Mucosa of descending colon (tissue), 3 donors: ENCODE measurements at regions of chr1 and their contacts with region 1.

Region 1: GRCh38 chr1:230310381-230311163 is 115.6 kb downstream of the PGBD5 start:
- DNase-seq: peak in 2 of 3 donors; percentile 78 to 84
- ATAC-seq: peak; percentile 82
- H3K4me3 ChIP-seq: no peak overlapping the region
- H3K4me1 ChIP-seq: no peaks in the 10 kb centered on the region
- CTCF ChIP-seq: peak; percentile 83

Region 2: DNA sequence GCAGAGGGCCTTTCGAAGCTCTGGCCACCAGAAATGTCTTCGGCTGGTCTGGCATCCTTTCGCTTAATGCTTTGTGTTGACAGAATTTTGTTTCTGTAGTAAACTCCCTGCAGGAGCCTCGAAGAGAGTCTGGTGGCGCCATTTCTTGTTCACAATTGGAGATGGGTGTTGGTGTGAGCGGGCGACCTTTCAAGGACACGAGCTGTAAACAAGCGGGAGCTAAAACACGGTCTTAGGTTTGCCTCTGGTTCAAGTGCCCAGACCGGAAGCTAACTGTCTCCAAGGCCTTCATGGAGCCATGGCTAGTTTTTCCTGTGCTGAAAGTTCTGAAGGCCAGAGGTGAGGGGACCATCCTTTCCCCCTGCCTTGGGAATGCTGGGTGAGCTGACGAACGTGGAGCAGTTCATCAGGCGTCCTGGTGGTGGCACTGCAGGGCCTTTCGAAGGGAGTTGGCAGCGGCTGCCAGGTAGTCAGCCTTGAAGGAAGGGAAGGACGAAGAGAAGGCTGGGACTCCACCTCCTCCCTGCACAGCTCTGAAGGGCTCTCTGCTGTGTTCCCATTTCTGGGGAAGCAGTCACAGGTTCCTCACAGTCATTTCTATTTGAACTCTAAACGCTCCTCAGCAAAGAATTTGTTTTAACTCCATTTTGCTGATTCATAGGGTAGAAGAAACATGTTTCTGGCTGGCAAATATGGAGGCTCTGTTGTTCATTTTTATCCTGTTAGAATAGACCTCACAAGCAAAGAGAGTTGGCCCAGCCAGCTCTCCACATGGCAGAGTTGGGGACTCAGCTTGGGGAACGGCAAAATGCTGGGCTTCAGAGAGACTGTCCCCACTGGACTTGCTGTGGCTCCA is 649.3 kb before region 1 on chr1:
- intact Hi-C with region 1: loop called (anchors 2 to 5 kb)
- DNase-seq: peak; percentile 80 to 88 (median 88)
- ATAC-seq: peak; percentile 98
- H3K4me3 ChIP-seq: no peak overlapping the region
- H3K4me1 ChIP-seq: no peaks in the 10 kb centered on the region
- CTCF ChIP-seq: peak; percentile 74